Ascending aorta (tissue), 2 donors: ENCODE measurements at regions of chr9 and their contacts with region 1.

Region 1: GRCh38 chr9:96031366-96031824 is 155.9 kb downstream of the ERCC6L2 start:
- DNase-seq: peak in 1 of 2 donors; percentile 80
- H3K4me3 ChIP-seq: no peak overlapping the region
- H3K27ac ChIP-seq: peak overlapping the region; percentile 20 to 44
- H3K4me1 ChIP-seq: peaks cover 9 to 33% of the 10 kb centered on the region in 2 donors
- H3K27me3 ChIP-seq: no peaks in the 10 kb centered on the region
- CTCF ChIP-seq: no peak

Region 2: GRCh38 chr9:95793924-95794828 is 237.2 kb before region 1 on chr9:
- intact Hi-C with region 1: no loop called
- DNase-seq: no peak
- H3K4me3 ChIP-seq: no peak overlapping the region
- H3K27ac ChIP-seq: peak overlapping the region in 1 of 2 donors; percentile 2
- H3K4me1 ChIP-seq: peaks cover 4 to 8% of the 10 kb centered on the region in 2 donors
- H3K27me3 ChIP-seq: no peaks in the 10 kb centered on the region
- CTCF ChIP-seq: no peak

Region 3: DNA sequence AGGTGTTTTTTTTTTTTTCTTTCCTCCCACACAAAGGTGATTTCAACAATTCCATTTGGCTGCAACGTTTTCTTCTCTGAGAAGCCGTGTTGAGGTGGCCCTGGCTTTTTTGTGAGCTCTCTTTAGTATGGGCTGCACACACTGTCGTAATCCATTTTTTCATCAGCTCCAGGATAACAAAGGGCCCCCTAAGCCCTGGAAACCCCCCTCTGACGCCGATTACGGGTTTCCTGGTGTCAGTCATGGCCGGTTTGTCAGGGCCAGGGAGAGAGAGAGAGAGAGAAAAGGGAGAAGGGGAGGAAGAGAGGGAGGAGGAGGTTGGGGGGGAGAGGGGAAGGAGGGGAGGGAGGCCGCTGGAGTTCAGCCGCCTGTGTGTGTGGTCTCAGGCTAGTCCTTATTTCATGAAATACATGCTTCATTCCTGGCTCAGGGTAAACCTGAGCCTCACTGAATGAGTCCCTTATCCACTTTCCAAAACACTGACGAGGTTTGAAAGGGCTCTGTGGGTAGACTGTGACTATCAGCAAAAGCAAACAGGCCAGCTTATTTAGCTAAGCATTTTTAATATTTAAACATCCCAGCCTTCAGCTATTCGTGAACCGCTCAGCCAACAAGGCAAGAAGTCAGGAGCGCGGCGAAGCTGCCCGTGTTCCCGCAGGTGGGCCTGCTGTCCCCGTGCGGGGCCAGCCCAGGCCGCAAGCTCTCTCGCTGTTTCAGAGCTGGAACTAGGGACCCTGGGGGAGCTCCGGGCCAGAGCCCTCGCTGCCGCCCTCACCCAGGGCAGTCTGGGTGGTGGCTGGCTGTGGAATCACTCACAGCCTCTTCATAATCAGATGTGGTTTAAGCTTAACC is 16.9 kb after region 1 on chr9:
- intact Hi-C with region 1: loop called (anchors 2 kb)
- DNase-seq: no peak
- H3K4me3 ChIP-seq: peak overlapping the region; percentile 14 to 51
- H3K27ac ChIP-seq: peak overlapping the region; percentile 85 to 88
- H3K4me1 ChIP-seq: peaks cover 4 to 21% of the 10 kb centered on the region in 2 donors
- H3K27me3 ChIP-seq: no peaks in the 10 kb centered on the region
- CTCF ChIP-seq: no peak

Region 4: GRCh38 chr9:96186591-96187011 is 155.2 kb after region 1 on chr9:
- intact Hi-C with region 1: no loop called
- DNase-seq: no peak
- H3K4me3 ChIP-seq: peak overlapping the region in 1 of 2 donors; percentile 13
- H3K27ac ChIP-seq: no peak overlapping the region
- H3K4me1 ChIP-seq: no peaks in the 10 kb centered on the region
- H3K27me3 ChIP-seq: no peaks in the 10 kb centered on the region
- CTCF ChIP-seq: no peak